B cell (primary cell): ENCODE measurements at regions of chr1 and their contacts with region 1.

Region 1: DNA sequence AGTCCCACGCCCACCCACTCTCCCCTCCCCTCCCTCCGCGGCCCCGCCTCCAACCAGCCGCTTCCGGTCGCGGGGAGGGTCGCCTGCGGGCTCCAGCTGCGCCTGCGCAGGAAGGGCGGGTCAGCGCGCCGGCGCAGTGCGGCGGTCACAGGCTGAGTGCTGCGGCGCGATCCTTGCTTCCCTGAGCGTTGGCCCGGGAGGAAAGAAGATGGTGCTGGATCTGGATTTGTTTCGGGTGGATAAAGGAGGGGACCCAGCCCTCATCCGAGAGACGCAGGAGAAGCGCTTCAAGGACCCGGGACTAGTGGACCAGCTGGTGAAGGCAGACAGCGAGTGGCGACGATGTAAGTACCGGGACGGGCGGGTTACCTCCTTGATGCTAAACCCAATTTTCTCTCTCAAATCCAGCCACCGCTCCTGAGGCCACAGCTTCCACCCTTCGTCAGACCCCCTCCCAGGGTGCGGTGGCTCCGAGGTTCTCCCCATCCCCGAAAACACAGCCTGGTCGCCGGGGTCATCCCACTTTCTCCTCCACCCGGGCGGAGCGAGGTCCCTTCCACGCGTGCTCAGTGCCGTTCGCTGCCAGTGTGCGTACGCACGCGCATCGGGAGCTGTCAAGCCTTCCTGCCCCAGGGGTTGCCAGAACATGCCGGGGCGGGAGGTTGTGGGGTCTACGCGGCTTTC is at the start of gene SARS1:
- DNase-seq: peak; percentile 93
- ATAC-seq: peak; percentile 88
- H3K4me3 ChIP-seq: peak within 1 kb of the TSS; percentile 88 to 97 (median 96)
- H3K4me3 Mint-ChIP-seq: peak within 1 kb of the TSS; percentile 100
- H3K27ac ChIP-seq: peak within 1 kb of the TSS; percentile 66 to 73
- H3K27ac Mint-ChIP-seq: peak within 1 kb of the TSS; percentile 98
- H3K4me1 ChIP-seq: peaks cover 22 to 24% of the 10 kb centered on the region in 2 donors
- H3K4me1 Mint-ChIP-seq: peaks cover 35% of the 10 kb centered on the region
- H3K27me3 ChIP-seq: no peaks in the 10 kb centered on the region
- H3K27me3 Mint-ChIP-seq: no peaks in the 10 kb centered on the region
- CTCF ChIP-seq: no peak
- total RNA-seq, gene SARS1: 115 and 119 TPM in 2 replicates

Region 2: DNA sequence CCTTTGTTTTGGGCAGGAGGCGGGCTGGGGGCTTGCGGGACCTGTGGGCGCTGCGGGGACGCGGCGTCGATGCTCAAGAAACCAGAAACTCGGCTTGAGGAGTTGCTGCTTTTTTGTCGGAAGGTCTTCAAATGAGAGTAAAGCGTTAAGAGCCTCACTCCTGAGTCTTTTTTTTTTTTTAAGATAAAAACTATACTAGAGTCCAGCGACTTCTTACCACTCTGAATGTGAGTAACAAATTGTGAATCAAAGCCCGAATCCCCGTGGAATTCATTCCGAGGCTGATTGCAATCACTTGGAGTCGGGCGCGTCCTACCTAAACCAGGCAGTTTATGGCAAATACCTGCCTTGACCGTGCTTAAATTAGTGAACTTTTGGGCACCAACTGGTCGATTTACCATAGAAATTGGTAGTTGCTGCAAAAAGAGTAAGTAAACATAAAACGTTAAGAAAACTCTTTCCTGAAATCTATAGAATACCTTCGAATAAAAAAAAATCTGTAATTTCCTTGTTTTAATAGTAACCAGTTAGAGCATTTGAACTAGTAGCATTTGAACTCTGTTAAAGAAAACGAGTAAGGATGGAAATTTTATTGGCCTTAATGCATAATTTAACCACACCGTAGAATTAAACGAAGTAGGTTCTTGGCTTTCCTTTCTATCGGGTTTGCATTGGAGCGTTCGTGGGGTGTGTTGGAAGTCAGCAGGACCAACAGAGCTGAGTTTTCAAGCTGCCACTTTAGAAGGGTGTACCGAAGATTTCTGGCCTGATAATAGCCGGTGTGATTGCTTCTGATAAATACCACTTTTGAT is 336.4 kb before region 1 on chr1:
- CTCF ChIA-PET with region 1: no interaction called
- POLR2A ChIA-PET with region 1: no interaction called
- intact Hi-C with region 1: loop called (anchors 5 kb)
- DNase-seq: peak; percentile 34
- ATAC-seq: no peak
- H3K4me3 ChIP-seq: peak overlapping the region; percentile 68 to 93 (median 86)
- H3K4me3 Mint-ChIP-seq: peak overlapping the region; percentile 98
- H3K27ac ChIP-seq: peak overlapping the region in 1 of 2 donors; percentile 67
- H3K27ac Mint-ChIP-seq: peak overlapping the region; percentile 88
- H3K4me1 ChIP-seq: peaks cover 11 to 12% of the 10 kb centered on the region in 2 donors
- H3K4me1 Mint-ChIP-seq: peaks cover 13% of the 10 kb centered on the region
- H3K27me3 ChIP-seq: no peaks in the 10 kb centered on the region
- H3K27me3 Mint-ChIP-seq: no peaks in the 10 kb centered on the region
- CTCF ChIP-seq: no peak

Region 3: GRCh38 chr1:108897865-108898720 is 315.8 kb before region 1 on chr1:
- CTCF ChIA-PET with region 1: no interaction called
- POLR2A ChIA-PET with region 1: no interaction called
- intact Hi-C with region 1: no loop called
- DNase-seq: peak; percentile 66
- ATAC-seq: peak; percentile 62
- H3K4me3 ChIP-seq: no peak overlapping the region
- H3K4me3 Mint-ChIP-seq: no peak overlapping the region
- H3K27ac ChIP-seq: no peak overlapping the region
- H3K27ac Mint-ChIP-seq: no peak overlapping the region
- H3K4me1 ChIP-seq: no peaks in the 10 kb centered on the region
- H3K4me1 Mint-ChIP-seq: no peaks in the 10 kb centered on the region
- H3K27me3 ChIP-seq: no peaks in the 10 kb centered on the region
- H3K27me3 Mint-ChIP-seq: no peaks in the 10 kb centered on the region
- CTCF ChIP-seq: peak; percentile 77

Region 4: GRCh38 chr1:109041621-109042468 is 172.1 kb before region 1 on chr1 and contains the start of gene WDR47:
- CTCF ChIA-PET with region 1: no interaction called
- POLR2A ChIA-PET with region 1: interaction called, 6 read pairs
- intact Hi-C with region 1: loop called (anchors 5 kb)
- DNase-seq: peak; percentile 96
- ATAC-seq: peak; percentile 96
- H3K4me3 ChIP-seq: peak within 1 kb of the TSS; percentile 30 to 93 (median 92)
- H3K4me3 Mint-ChIP-seq: peak within 1 kb of the TSS; percentile 97
- H3K27ac ChIP-seq: peak within 1 kb of the TSS; percentile 67 to 75
- H3K27ac Mint-ChIP-seq: peak within 1 kb of the TSS; percentile 95
- H3K4me1 ChIP-seq: peaks cover 7% of the 10 kb centered on the region in 2 donors
- H3K4me1 Mint-ChIP-seq: peaks cover 16% of the 10 kb centered on the region
- H3K27me3 ChIP-seq: no peaks in the 10 kb centered on the region
- H3K27me3 Mint-ChIP-seq: peaks cover 3% of the 10 kb centered on the region
- CTCF ChIP-seq: no peak
- total RNA-seq, gene WDR47: 17.3 and 21.6 TPM in 2 replicates

Region 5: DNA sequence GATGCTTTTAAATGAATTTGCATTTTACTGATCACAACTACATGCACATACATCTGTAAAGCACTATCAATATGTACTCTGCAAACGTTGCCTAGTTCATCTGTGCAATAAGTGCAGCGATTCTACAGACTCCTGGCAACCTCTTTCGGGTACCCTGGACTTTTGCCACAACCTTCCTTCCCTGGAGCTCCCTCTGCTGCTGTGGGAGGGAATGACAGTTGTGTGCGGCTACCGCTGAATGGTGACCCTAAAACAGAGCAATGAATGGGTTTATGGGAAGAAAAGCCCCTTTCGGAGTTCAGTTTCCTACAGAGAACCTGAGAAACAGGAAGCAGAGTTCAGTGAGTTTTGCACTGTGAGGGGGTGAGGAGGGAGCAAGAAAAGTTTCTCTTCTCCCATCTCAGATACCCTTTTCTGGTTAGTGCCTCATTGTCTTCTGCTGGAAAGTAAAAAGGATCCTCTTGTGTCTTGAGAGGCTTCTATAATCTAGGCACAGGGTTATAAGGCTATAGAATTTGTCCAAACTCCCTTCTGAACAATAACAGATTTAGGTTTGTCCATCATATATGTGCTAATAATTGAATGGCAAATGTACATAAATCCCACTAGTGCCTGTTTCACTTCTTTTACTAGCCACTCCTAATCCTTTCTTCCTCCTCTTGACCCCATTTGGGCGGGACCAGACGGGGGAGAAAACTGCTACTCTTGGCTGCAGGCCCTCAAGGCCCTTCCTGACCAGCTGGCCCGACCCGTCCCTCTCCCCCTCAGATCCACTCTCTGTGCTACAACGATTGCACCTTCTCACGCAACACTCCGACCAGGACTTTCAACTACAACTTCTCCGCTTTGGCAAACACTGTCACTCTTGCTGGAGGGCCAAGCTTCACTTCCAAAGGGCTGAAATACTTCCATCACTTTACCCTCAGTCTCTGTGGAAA is 20.0 kb before region 1 on chr1:
- CTCF ChIA-PET with region 1: interaction called, 5 read pairs
- POLR2A ChIA-PET with region 1: no interaction called
- intact Hi-C with region 1: loop called (anchors 1 kb)
- DNase-seq: peak; percentile 75
- ATAC-seq: peak; percentile 94
- H3K4me3 ChIP-seq: no peak overlapping the region
- H3K4me3 Mint-ChIP-seq: no peak overlapping the region
- H3K27ac ChIP-seq: no peak overlapping the region
- H3K27ac Mint-ChIP-seq: peak overlapping the region; percentile 10
- H3K4me1 ChIP-seq: peaks cover 9 to 10% of the 10 kb centered on the region in 2 donors
- H3K4me1 Mint-ChIP-seq: peaks cover 10% of the 10 kb centered on the region
- H3K27me3 ChIP-seq: no peaks in the 10 kb centered on the region
- H3K27me3 Mint-ChIP-seq: peaks cover 6% of the 10 kb centered on the region
- CTCF ChIP-seq: peak; percentile 80

Region 6: GRCh38 chr1:109282952-109283747 is 69.2 kb after region 1 on chr1 and contains the start of gene PSRC1:
- CTCF ChIA-PET with region 1: no interaction called
- POLR2A ChIA-PET with region 1: no interaction called
- intact Hi-C with region 1: loop called (anchors 1 kb)
- DNase-seq: peak; percentile 94
- ATAC-seq: peak; percentile 99
- H3K4me3 ChIP-seq: peak within 1 kb of the TSS; percentile 68 to 93 (median 80)
- H3K4me3 Mint-ChIP-seq: peak within 1 kb of the TSS; percentile 97
- H3K27ac ChIP-seq: peak within 1 kb of the TSS in 1 of 2 donors; percentile 22
- H3K27ac Mint-ChIP-seq: peak within 1 kb of the TSS; percentile 88
- H3K4me1 ChIP-seq: peaks cover 12 to 19% of the 10 kb centered on the region in 2 donors
- H3K4me1 Mint-ChIP-seq: peaks cover 16% of the 10 kb centered on the region
- H3K27me3 ChIP-seq: no peaks in the 10 kb centered on the region
- H3K27me3 Mint-ChIP-seq: peaks cover 3% of the 10 kb centered on the region
- CTCF ChIP-seq: peak; percentile 71
- total RNA-seq, gene PSRC1: not detected in 2 replicates